Panc1 (cell line): ENCODE measurements at regions of chr3 and their contacts with region 1.

Region 1: GRCh38 chr3:58198362-58198761 is 12.4 kb downstream of the DNASE1L3 start:
- DNase-seq: no peak
- ATAC-seq: no peak
- H3K4me3 ChIP-seq: no peak overlapping the region
- H3K27ac ChIP-seq: no peak overlapping the region
- H3K4me1 ChIP-seq: no peaks in the 10 kb centered on the region
- H3K27me3 ChIP-seq: no peaks in the 10 kb centered on the region
- CTCF ChIP-seq: no peak

Region 2: GRCh38 chr3:57091521-57092273 is 1106.7 kb before region 1 on chr3:
- CTCF ChIA-PET with region 1: no interaction called
- POLR2A ChIA-PET with region 1: no interaction called
- in situ Hi-C with region 1: no loop called
- intact Hi-C with region 1: no loop called
- DNase-seq: no peak
- ATAC-seq: no peak
- H3K4me3 ChIP-seq: no peak overlapping the region
- H3K27ac ChIP-seq: no peak overlapping the region
- H3K4me1 ChIP-seq: no peaks in the 10 kb centered on the region
- H3K27me3 ChIP-seq: no peaks in the 10 kb centered on the region
- CTCF ChIP-seq: no peak

Region 3: GRCh38 chr3:57864853-57865252 is 333.5 kb before region 1 on chr3:
- CTCF ChIA-PET with region 1: no interaction called
- POLR2A ChIA-PET with region 1: interaction called, 10 read pairs
- in situ Hi-C with region 1: no loop called
- intact Hi-C with region 1: no loop called
- DNase-seq: no peak
- ATAC-seq: no peak
- H3K4me3 ChIP-seq: no peak overlapping the region
- H3K27ac ChIP-seq: no peak overlapping the region
- H3K4me1 ChIP-seq: no peaks in the 10 kb centered on the region
- H3K27me3 ChIP-seq: no peaks in the 10 kb centered on the region
- CTCF ChIP-seq: peak; percentile 40; the same call in 1 of the 2 replicates

Region 4: DNA sequence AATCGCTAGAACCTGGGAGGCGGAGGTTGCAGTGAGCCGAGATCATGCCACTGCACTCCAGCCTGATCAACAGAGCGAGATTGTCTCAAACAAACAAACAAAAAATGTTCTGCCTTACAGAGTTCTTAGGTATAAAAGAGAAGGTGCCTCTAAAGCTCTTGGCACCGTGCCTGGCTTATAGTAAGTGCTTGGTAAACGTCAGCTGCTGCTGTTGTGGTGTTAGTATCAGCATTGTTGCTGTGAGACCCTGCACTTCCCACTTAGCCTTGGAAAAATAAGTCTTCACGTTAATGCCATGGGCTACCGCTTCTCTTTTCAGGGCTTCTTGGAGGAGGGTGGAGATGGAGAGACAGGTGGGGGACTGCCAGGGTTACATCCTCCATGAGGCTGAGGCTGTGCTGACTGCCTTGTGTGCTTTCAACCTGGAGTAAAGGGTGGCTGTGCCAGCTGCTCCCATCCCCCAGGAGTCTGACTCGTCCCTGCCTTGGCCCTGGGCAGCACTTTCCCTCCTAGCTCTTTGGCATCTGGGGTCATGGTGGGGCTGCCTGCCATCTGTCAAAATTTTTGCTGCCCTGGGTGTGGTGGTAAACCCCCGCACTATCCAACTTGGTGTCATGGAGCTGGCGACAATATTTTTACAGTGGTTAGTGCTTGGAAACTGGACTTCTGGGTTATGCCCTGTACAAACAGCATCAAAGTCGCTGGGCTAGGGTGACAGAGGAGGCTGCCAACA is 172.4 kb before region 1 on chr3:
- CTCF ChIA-PET with region 1: no interaction called
- POLR2A ChIA-PET with region 1: no interaction called
- in situ Hi-C with region 1: no loop called
- intact Hi-C with region 1: no loop called
- DNase-seq: no peak
- ATAC-seq: peak; percentile 68
- H3K4me3 ChIP-seq: peak overlapping the region in 1 of 2 experiments; percentile 32; a peak in 2 of 4 replicates
- H3K27ac ChIP-seq: peak overlapping the region; percentile 75
- H3K4me1 ChIP-seq: peaks cover 77% of the 10 kb centered on the region
- H3K27me3 ChIP-seq: no peaks in the 10 kb centered on the region
- CTCF ChIP-seq: no peak

Region 5: DNA sequence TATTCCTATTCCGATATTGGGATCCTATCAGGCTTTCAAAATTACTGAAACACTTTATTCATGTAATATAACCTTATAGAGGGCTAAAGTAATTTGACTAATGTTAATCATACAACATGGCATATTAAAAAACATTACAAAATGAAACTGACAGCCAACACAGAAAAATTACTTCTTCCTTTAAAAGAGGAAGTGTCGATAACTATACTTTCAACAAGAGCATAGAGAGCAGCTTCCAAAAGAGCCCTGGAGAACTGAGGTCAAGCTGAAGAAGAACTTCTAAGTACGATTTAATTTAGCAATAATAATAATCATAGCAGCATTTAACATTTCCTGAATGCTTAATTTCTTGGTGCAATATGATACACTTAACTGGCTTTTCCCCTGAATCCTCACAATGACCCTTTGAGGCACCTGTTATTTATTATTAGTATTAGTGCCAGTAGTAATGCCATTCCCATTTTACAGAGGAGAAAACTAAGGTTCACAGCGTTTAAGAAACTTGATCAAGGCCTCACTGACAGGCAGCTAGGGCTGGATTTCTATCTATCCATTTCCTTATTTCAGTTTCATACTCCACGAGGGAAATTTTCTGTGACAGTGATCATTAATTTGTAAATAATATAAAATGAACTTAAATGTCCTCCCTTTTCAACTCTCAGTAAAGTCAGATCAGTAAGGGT is 669.9 kb after region 1 on chr3:
- CTCF ChIA-PET with region 1: no interaction called
- POLR2A ChIA-PET with region 1: no interaction called
- in situ Hi-C with region 1: no loop called
- intact Hi-C with region 1: no loop called
- DNase-seq: no peak
- ATAC-seq: no peak
- H3K4me3 ChIP-seq: no peak overlapping the region
- H3K27ac ChIP-seq: no peak overlapping the region
- H3K4me1 ChIP-seq: no peaks in the 10 kb centered on the region
- H3K27me3 ChIP-seq: no peaks in the 10 kb centered on the region
- CTCF ChIP-seq: no peak